ENCODE measurements at regions of chr7 and their contacts with region 1.

Region 1: DNA sequence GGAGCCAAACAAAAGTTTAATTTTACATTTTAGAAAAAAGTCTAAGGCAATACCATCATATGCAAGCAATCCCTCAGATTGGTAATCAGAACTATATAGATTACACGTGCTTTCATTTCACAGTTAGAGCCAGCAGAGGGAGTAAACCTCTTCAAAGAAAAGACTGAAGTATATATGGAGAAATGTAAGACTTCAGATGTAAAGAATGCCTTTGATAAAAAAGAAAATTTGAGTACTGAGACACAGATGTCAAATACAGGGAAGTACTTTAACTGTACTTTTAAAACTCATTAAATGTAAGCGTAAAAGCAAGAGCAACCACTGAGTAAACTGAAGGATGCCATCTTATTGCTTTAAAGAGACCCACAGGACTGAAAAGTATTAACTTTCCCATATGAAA is 101.4 kb upstream of the FAM133B start:
- DNase-seq: peak; percentile 38 to 58 (median 43)
- H3K4me3 ChIP-seq: no peak overlapping the region
- H3K4me3 Mint-ChIP-seq: peak overlapping the region in 2 of 8 donors; percentile 4 to 6
- H3K27ac ChIP-seq: no peak overlapping the region
- H3K27ac Mint-ChIP-seq: peak overlapping the region; percentile 18 to 84 (median 55)
- H3K4me1 ChIP-seq: peaks cover 32% of the 10 kb centered on the region
- H3K4me1 Mint-ChIP-seq: peaks cover 20 to 42% (median 33%) of the 10 kb centered on the region in 4 donors
- H3K27me3 ChIP-seq: no peaks in the 10 kb centered on the region
- H3K27me3 Mint-ChIP-seq: no peaks in the 10 kb centered on the region

Region 2: DNA sequence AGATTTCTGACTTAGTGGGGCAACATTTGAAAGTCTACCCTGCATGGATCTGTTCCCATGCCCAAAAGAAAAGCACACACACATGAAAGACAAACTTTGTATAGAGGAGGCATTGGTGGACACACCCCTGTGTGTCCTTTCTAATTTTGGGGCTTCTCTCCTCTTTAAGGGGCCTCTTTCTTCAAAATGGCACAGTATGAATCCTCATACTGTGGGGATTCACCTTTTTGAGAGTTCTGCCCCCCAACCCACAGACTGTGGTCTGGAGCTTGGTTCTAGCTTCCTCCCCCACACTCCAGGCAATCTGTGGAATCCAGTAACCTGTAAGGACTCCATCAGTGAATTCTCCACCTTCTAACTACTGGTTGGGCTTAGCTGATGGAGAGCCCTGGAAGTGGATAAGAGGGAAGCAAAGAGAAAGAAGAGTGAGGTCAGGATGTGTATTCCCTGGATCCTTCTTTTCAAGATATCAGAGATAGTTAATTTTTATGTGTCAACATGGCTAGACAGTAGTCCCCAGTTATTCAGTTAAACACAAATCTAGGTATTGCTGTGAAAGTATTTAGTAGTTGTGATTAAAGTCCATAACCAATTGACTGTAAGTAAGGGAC is 177.2 kb after region 1 on chr7:
- CTCF ChIA-PET with region 1: interaction called, 3 read pairs
- POLR2A ChIA-PET with region 1: no interaction called
- intact Hi-C with region 1: loop called (anchors 1 kb)
- DNase-seq: no peak
- H3K4me3 ChIP-seq: no peak overlapping the region
- H3K4me3 Mint-ChIP-seq: no peak overlapping the region
- H3K27ac ChIP-seq: no peak overlapping the region
- H3K27ac Mint-ChIP-seq: no peak overlapping the region
- H3K4me1 ChIP-seq: no peaks in the 10 kb centered on the region
- H3K4me1 Mint-ChIP-seq: peaks cover 0 to 3% (median under 1%) of the 10 kb centered on the region in 4 donors
- H3K27me3 ChIP-seq: no peaks in the 10 kb centered on the region
- H3K27me3 Mint-ChIP-seq: peaks cover 2 to 6% of the 10 kb centered on the region in 2 donors

Region 3: GRCh38 chr7:93055543-93056107 is 364.0 kb after region 1 on chr7:
- CTCF ChIA-PET with region 1: no interaction called
- POLR2A ChIA-PET with region 1: no interaction called
- intact Hi-C with region 1: loop called (anchors 1 kb)
- DNase-seq: peak in 4 of 5 donors; percentile 37 to 48 (median 46)
- H3K4me3 ChIP-seq: no peak overlapping the region
- H3K4me3 Mint-ChIP-seq: no peak overlapping the region
- H3K27ac ChIP-seq: no peak overlapping the region
- H3K27ac Mint-ChIP-seq: no peak overlapping the region
- H3K4me1 ChIP-seq: no peaks in the 10 kb centered on the region
- H3K4me1 Mint-ChIP-seq: peaks cover 0 to 2% (median 0%) of the 10 kb centered on the region in 4 donors
- H3K27me3 ChIP-seq: no peaks in the 10 kb centered on the region
- H3K27me3 Mint-ChIP-seq: peaks cover 0 to 4% of the 10 kb centered on the region in 2 donors